Head of caudate nucleus (tissue), 42 donors: ENCODE measurements at regions of chr5 and their contacts with region 1.

Region 1: GRCh38 chr5:132736853-132737833 is at the start of gene KIF3A:
- DNase-seq: peak; percentile 92 to 99 (median 97)

Region 2: GRCh38 chr5:132820162-132820754 is 83.1 kb after region 1 on chr5:
- intact Hi-C with region 1: loop called (anchors 5 kb)
- DNase-seq: peak; percentile 90 to 100 (median 98)

Region 3: GRCh38 chr5:132947671-132948070 is 210.5 kb after region 1 on chr5:
- intact Hi-C with region 1: no loop called
- DNase-seq: no peak